ENCODE measurements at regions of chr20 and their contacts with region 1.

Region 1: GRCh38 chr20:46307139-46307998 is 929 bp downstream of the CDH22 start:
- DNase-seq: peak; percentile 53
- H3K4me3 Mint-ChIP-seq: no peak overlapping the region
- H3K27ac Mint-ChIP-seq: no peak overlapping the region
- H3K4me1 Mint-ChIP-seq: no peaks in the 10 kb centered on the region
- H3K27me3 Mint-ChIP-seq: peaks cover 66% of the 10 kb centered on the region

Region 2: DNA sequence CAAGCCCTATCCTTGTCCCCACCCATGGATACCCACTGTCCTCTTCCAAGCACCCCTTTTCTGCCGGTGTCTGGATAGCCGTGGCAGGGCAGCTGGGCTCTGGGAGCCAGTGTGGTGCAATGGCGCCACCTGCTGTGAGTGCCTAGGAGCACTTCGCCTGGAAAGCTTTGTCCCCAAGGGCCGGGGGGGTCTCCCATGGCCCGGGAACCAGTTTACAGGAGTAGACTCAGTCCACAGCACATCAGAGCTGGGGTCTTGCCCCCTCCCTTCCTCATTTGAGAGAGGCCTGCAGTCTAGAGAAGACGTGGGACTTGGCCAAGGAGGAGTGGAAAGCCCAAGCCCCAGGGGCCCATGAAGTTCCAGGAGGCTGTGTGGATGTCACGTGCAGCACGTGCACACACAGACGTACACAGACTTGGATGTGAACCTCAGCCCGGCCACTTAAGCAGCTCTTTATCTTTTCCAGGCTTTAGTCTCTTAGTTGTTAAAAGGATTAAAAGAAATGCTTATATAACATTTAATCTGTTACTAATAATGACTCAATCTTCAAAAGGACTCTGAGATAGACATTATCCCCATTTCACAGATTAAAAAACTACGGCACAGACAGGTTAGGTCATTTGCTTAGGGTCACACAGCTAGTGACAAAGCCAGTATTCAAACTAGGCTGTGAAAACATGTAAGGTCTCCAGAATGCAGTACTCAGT is 41.8 kb after region 1 on chr20:
- intact Hi-C with region 1: loop called (anchors 1 kb)
- DNase-seq: peak; percentile 32
- H3K4me3 Mint-ChIP-seq: no peak overlapping the region
- H3K27ac Mint-ChIP-seq: no peak overlapping the region
- H3K4me1 Mint-ChIP-seq: peaks cover 10% of the 10 kb centered on the region
- H3K27me3 Mint-ChIP-seq: peaks cover 7% of the 10 kb centered on the region

Region 3: DNA sequence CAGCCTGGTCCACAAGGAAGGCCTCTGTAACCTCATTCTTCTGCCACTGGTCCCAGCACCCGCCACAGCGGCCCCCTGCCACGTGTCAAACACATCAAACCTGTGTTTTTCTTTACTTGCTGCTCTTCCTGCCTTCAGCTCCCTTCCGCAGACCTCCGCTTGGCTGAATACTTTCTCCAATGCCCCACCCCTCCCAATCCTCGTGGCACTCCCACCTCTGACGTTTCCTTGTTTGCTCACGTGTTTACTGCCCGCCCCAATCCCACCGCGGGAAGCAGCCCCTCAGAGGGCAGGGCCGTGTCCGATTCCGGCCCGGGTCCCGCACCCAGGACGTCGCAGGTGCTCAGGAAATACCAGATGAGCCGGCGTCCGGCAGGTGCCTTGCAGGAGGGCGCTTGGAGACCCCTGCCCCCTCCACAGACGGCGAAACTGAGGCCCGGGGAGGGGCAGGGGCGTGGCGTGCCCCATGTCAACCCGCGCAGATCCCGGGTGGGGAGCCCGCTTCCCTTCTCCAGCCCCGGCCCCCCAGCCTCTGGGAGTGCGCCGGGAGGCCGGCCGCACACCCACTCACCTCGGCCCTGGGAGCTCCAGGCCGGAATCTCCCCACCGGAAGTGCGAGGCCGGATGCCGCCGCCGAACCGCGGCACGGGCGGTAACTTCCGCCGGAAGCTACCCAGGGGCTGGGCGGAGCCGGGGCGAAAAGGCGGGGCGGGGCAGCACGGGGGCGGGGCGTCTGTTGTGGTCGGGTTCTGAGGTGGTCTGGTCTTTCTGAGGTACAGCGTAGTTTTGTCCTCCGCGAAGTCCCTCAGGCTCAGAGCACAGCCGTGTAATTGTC is 56.6 kb after region 1 on chr20:
- intact Hi-C with region 1: no loop called
- DNase-seq: peak; percentile 84
- H3K4me3 Mint-ChIP-seq: peak overlapping the region; percentile 88
- H3K27ac Mint-ChIP-seq: peak overlapping the region; percentile 87
- H3K4me1 Mint-ChIP-seq: peaks cover 50% of the 10 kb centered on the region
- H3K27me3 Mint-ChIP-seq: no peaks in the 10 kb centered on the region

Region 4: DNA sequence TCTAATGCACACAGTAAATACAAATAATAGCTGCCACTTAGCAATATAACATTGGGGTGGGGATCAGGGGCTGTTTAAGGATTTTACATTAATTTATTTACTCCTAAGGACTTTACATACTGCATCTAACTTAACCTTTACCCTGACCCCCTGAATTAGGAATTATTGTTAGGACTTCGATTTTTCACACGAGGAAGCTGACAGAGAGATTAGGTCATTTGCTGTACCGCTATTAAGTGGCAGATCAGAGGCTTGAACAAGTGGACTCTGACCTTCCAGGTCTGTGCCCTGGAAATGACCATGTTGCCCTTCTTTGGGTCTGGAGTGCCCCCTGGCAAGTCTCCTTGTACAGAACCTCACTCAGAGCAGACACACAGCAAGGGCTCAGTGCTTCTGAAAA is 104.3 kb after region 1 on chr20:
- intact Hi-C with region 1: loop called (anchors 1 kb)
- DNase-seq: no peak
- H3K4me3 Mint-ChIP-seq: no peak overlapping the region
- H3K27ac Mint-ChIP-seq: no peak overlapping the region
- H3K4me1 Mint-ChIP-seq: peaks cover 30% of the 10 kb centered on the region
- H3K27me3 Mint-ChIP-seq: peaks cover 22% of the 10 kb centered on the region

Region 5: GRCh38 chr20:46757754-46758678 is 450.6 kb after region 1 on chr20:
- intact Hi-C with region 1: no loop called
- DNase-seq: peak; percentile 61
- H3K4me3 Mint-ChIP-seq: no peak overlapping the region
- H3K27ac Mint-ChIP-seq: no peak overlapping the region
- H3K4me1 Mint-ChIP-seq: no peaks in the 10 kb centered on the region
- H3K27me3 Mint-ChIP-seq: peaks cover 1% of the 10 kb centered on the region